Calu3 (cell line): ENCODE measurements at regions of chr18 and their contacts with region 1.

Region 1: GRCh38 chr18:77132371-77133050 is at the start of gene MBP:
- DNase-seq: peak; percentile 99
- H3K4me3 Mint-ChIP-seq: peak within 1 kb of the TSS; percentile 93
- H3K27ac Mint-ChIP-seq: peak within 1 kb of the TSS; percentile 72
- H3K4me1 Mint-ChIP-seq: peaks cover 32% of the 10 kb centered on the region
- H3K27me3 Mint-ChIP-seq: no peaks in the 10 kb centered on the region
- CTCF ChIP-seq: no peak
- total RNA-seq, gene MBP: 221 and 257 TPM in 2 replicates

Region 2: DNA sequence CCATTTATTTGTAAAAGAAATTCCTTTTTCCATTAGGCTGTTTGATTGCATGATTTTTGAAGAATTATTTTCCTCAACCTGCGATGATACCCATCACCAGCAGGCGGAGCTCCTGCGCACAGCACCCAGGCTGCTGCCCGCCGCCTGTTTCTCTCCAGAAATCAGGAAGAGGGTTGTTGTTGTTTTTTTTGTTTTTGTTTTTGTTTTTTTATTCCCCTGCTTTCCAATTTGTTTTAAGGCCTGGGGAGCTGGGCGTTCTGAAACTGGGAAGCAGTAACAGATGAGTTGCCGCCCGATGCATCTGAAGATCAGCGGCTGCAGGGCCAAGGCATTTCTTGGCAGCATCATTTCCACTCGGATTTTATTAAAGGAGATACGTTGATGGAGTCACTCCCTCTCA is 132.0 kb before region 1 on chr18:
- CTCF ChIA-PET with region 1: no interaction called
- intact Hi-C with region 1: loop called (anchors 2 kb)
- DNase-seq: peak; percentile 82
- H3K4me3 Mint-ChIP-seq: no peak overlapping the region
- H3K27ac Mint-ChIP-seq: no peak overlapping the region
- H3K4me1 Mint-ChIP-seq: no peaks in the 10 kb centered on the region
- H3K27me3 Mint-ChIP-seq: no peaks in the 10 kb centered on the region
- CTCF ChIP-seq: peak; percentile 100

Region 3: DNA sequence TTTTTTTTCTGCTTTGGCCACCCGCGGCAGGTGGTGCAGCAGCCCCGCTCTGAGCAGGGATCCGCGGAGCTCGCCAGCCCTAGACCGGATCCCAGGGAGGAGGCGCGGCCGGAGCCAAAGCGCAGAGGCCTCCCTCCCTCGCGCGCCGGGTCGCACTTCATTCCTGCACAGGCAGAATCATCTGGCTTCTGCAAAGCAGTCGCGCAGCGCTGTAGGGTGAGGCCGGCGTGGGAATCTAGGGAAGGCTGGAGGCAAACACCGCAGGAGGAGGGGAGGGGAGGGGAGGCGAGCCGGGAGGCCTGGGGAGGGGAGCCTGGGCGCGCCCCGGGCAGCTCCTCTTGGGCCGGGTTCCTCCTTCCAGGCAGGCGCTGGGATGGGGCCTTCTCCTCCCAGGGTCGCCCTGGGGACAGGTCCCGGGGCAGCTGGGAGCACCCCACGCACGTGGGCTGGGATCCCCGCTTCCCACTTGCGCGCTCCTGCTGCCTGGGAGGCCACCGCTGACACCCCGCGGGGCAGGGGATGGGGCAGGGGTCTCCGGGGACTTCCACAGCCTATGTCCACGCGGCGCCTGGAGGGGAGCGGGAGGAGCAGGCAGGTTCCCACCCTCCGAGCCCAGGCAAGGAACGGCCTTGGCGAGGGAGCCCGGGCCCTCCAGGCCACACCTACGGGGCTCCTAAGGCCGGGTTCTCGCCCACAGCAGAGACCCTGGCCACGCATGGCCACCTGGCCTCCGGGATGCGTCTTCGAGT is 44.9 kb before region 1 on chr18:
- CTCF ChIA-PET with region 1: interaction called, 3 read pairs
- intact Hi-C with region 1: loop called (anchors 5 kb)
- DNase-seq: peak; percentile 67
- H3K4me3 Mint-ChIP-seq: peak overlapping the region; percentile 67
- H3K27ac Mint-ChIP-seq: peak overlapping the region; percentile 45
- H3K4me1 Mint-ChIP-seq: peaks cover 85% of the 10 kb centered on the region
- H3K27me3 Mint-ChIP-seq: no peaks in the 10 kb centered on the region
- CTCF ChIP-seq: no peak

Region 4: DNA sequence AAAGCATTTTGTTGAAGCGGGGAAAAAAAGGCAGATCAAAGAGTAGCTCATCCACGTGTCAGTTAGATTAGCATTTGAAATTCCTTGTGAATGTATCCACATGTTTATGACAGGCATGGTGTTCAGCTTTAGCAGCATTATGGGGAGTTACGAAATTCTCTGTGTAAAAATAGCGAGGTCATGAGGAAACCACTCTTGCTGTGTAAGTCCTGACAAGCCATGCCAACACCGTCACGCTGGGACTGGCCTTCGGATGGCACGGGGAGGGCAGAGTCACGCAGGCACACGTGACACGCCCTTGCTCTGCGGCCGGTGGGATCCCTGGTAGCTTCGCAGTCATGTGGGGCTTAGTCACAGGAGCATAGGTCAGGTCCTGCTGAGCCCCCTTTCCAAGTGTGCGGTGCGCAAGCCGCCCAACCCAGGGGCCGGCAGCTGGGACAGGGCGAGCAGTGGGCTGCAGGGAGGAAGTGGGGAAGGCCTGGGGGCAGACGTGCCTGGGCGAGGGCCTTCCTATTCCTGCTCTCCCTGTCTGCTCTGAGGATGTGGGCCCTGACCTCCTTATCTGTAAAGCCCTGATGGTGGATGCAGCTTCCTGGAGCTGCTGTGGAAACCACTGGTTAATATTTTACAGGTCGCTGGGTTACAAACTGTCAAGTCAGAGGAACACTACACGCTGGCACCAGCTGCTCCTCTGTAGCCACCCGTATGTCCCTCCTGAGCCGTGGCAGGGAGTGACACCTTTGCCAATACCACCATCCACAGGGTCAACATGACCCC is 17.9 kb before region 1 on chr18:
- CTCF ChIA-PET with region 1: interaction called, 33 read pairs
- intact Hi-C with region 1: loop called (anchors 1 kb)
- DNase-seq: peak; percentile 97
- H3K4me3 Mint-ChIP-seq: peak overlapping the region; percentile 54
- H3K27ac Mint-ChIP-seq: peak overlapping the region; percentile 96
- H3K4me1 Mint-ChIP-seq: peaks cover 79% of the 10 kb centered on the region
- H3K27me3 Mint-ChIP-seq: no peaks in the 10 kb centered on the region
- CTCF ChIP-seq: no peak